GM12878 (cell line): ENCODE measurements at regions of chr3 and their contacts with region 1.

Region 1: GRCh38 chr3:185308126-185308754 is 54.4 kb upstream of the EHHADH start:
- DNase-seq: peak; percentile 49
- ATAC-seq: peak; percentile 86
- H3K4me3 ChIP-seq: no peak overlapping the region
- H3K27ac ChIP-seq: no peak overlapping the region
- H3K4me1 ChIP-seq: no peaks in the 10 kb centered on the region
- H3K27me3 ChIP-seq: no peaks in the 10 kb centered on the region
- CTCF ChIP-seq: peak; percentile 80 to 86 (median 83)
- EP300 ChIP-seq: no peak
- POLR2A ChIP-seq: no peak
- RAD21 ChIP-seq: peak; percentile 89

Region 2: GRCh38 chr3:184568924-184569829 is 739.1 kb before region 1 on chr3:
- CTCF ChIA-PET with region 1: no interaction called
- POLR2A ChIA-PET with region 1: no interaction called
- RAD21 ChIA-PET with region 1: no interaction called
- SMC1A ChIA-PET with region 1: no interaction called
- in situ Hi-C with region 1: no loop called
- intact Hi-C with region 1: no loop called
- DNase-seq: no peak
- ATAC-seq: no peak
- H3K4me3 ChIP-seq: no peak overlapping the region
- H3K27ac ChIP-seq: no peak overlapping the region
- H3K4me1 ChIP-seq: no peaks in the 10 kb centered on the region
- H3K27me3 ChIP-seq: peaks cover 5 to 13% of the 10 kb centered on the region in 2 experiments
- CTCF ChIP-seq: no peak
- EP300 ChIP-seq: no peak
- POLR2A ChIP-seq: no peak
- RAD21 ChIP-seq: no peak

Region 3: GRCh38 chr3:184874709-184875644 is 433.3 kb before region 1 on chr3:
- CTCF ChIA-PET with region 1: interaction called, 18 read pairs
- POLR2A ChIA-PET with region 1: interaction called, 4 read pairs
- RAD21 ChIA-PET with region 1: interaction called, 7 read pairs
- SMC1A ChIA-PET with region 1: interaction called, 7 read pairs
- in situ Hi-C with region 1: no loop called
- intact Hi-C with region 1: loop called (anchors 1 kb)
- DNase-seq: no peak
- ATAC-seq: peak; percentile 69
- H3K4me3 ChIP-seq: no peak overlapping the region
- H3K27ac ChIP-seq: no peak overlapping the region
- H3K4me1 ChIP-seq: no peaks in the 10 kb centered on the region
- H3K27me3 ChIP-seq: no peaks in the 10 kb centered on the region
- CTCF ChIP-seq: peak; percentile 51 to 73 (median 52); a peak in 5 of 6 replicates
- EP300 ChIP-seq: no peak
- POLR2A ChIP-seq: no peak
- RAD21 ChIP-seq: peak; percentile 88

Region 4: DNA sequence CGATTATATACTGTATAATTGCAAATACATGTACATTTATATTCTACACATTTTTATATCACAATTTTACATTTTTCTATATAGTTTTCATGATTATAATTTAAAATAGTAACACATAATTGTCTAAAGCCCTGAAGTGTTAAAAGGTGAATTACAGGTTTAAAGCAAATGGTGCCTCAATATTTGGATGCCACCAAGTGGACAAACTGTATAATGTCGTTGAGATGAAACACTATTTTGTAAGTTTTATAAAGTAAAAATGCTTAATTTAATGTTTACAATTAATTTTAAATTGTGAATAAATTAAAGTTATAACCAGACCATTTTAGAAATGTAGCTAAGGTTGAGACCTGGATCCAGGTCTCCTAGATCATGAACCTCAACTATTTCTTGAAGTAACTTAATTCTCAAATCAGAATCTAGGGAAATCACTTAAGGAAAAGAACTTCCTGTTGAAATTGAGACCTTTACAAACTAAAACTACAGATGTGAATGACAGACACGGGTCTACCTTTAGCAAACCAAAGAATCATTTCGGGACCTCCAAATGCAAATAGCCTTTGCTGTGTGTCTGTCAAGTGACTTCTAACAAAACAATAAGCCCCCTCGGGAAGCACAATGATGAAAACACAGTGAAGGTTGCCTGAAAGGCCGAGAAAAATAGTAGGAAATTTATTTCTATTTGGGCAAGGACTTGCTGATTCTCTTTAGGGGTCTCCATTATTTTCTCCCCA is 92.2 kb before region 1 on chr3:
- CTCF ChIA-PET with region 1: interaction called, 18 read pairs
- POLR2A ChIA-PET with region 1: no interaction called
- RAD21 ChIA-PET with region 1: interaction called, 4 read pairs
- SMC1A ChIA-PET with region 1: interaction called, 7 read pairs
- in situ Hi-C with region 1: no loop called
- intact Hi-C with region 1: loop called (anchors 2 kb)
- DNase-seq: no peak
- ATAC-seq: peak; percentile 52; the same call in 2 of the 3 replicates
- H3K4me3 ChIP-seq: no peak overlapping the region
- H3K27ac ChIP-seq: no peak overlapping the region
- H3K4me1 ChIP-seq: no peaks in the 10 kb centered on the region
- H3K27me3 ChIP-seq: no peaks in the 10 kb centered on the region
- CTCF ChIP-seq: peak; percentile 37 to 60 (median 43); a peak in 4 of 6 replicates
- EP300 ChIP-seq: no peak
- POLR2A ChIP-seq: no peak
- RAD21 ChIP-seq: peak; percentile 82

Region 5: DNA sequence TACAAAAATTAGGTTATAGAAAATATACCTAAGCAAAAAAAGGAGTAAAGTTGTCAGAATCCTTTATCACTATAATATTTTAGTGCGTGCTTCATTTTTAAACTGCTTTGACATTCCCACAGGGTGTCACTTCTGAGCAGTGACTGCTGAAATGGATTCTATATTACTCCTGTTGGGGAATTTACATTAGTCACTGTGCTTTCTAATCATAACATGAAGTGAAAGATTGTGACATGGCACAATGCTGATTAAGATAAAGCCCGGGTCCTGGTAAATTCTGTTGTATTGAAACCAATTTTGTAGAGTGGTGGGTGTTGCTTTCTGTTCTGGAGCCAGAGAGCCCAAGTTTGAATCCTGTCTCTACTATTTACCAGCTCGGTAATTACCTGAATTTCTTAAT is 18.0 kb before region 1 on chr3:
- CTCF ChIA-PET with region 1: interaction called, 90 read pairs
- POLR2A ChIA-PET with region 1: interaction called, 3 read pairs
- RAD21 ChIA-PET with region 1: interaction called, 19 read pairs
- SMC1A ChIA-PET with region 1: interaction called, 35 read pairs
- in situ Hi-C with region 1: no loop called
- intact Hi-C with region 1: no loop called
- DNase-seq: no peak
- ATAC-seq: peak; percentile 88
- H3K4me3 ChIP-seq: no peak overlapping the region
- H3K27ac ChIP-seq: no peak overlapping the region; the same call in 1 of the 2 replicates
- H3K4me1 ChIP-seq: no peaks in the 10 kb centered on the region
- H3K27me3 ChIP-seq: no peaks in the 10 kb centered on the region
- CTCF ChIP-seq: peak in 1 of 3 experiments; percentile 49; a peak in 2 of 6 replicates
- EP300 ChIP-seq: no peak
- POLR2A ChIP-seq: no peak
- RAD21 ChIP-seq: peak; percentile 56

Region 6: GRCh38 chr3:185332026-185332735 is 23.9 kb after region 1 on chr3:
- CTCF ChIA-PET with region 1: interaction called, 20 read pairs
- POLR2A ChIA-PET with region 1: no interaction called
- RAD21 ChIA-PET with region 1: interaction called, 3 read pairs
- SMC1A ChIA-PET with region 1: interaction called, 9 read pairs
- in situ Hi-C with region 1: no loop called
- intact Hi-C with region 1: no loop called
- DNase-seq: peak; percentile 52
- ATAC-seq: peak; percentile 99
- H3K4me3 ChIP-seq: no peak overlapping the region
- H3K27ac ChIP-seq: no peak overlapping the region; the same call in 1 of the 2 replicates
- H3K4me1 ChIP-seq: peaks cover 10% of the 10 kb centered on the region
- H3K27me3 ChIP-seq: no peaks in the 10 kb centered on the region
- CTCF ChIP-seq: no peak
- EP300 ChIP-seq: 0 out of 4 replicates have a peak, but pooled peaks of 1 of the 2 experiments have one; percentile 14
- POLR2A ChIP-seq: no peak
- RAD21 ChIP-seq: no peak